ENCODE measurements at regions of chr14 and their contacts with region 1.

Region 1: GRCh38 chr14:101761032-101761880 is at the start of gene PPP2R5C:
- DNase-seq: peak; percentile 74 to 94 (median 87)
- ATAC-seq: peak; percentile 61
- H3K4me3 ChIP-seq: peak within 1 kb of the TSS; percentile 97 to 98
- H3K4me3 Mint-ChIP-seq: peak within 1 kb of the TSS; percentile 95
- H3K27ac ChIP-seq: peak within 1 kb of the TSS; percentile 90 to 93
- H3K27ac Mint-ChIP-seq: peak within 1 kb of the TSS; percentile 94
- H3K4me1 ChIP-seq: peaks cover 25% of the 10 kb centered on the region
- H3K4me1 Mint-ChIP-seq: peaks cover 41% of the 10 kb centered on the region
- H3K27me3 ChIP-seq: no peaks in the 10 kb centered on the region
- H3K27me3 Mint-ChIP-seq: no peaks in the 10 kb centered on the region
- CTCF ChIP-seq: no peak
- total RNA-seq, gene PPP2R5C: 557 to 560 TPM

Region 2: DNA sequence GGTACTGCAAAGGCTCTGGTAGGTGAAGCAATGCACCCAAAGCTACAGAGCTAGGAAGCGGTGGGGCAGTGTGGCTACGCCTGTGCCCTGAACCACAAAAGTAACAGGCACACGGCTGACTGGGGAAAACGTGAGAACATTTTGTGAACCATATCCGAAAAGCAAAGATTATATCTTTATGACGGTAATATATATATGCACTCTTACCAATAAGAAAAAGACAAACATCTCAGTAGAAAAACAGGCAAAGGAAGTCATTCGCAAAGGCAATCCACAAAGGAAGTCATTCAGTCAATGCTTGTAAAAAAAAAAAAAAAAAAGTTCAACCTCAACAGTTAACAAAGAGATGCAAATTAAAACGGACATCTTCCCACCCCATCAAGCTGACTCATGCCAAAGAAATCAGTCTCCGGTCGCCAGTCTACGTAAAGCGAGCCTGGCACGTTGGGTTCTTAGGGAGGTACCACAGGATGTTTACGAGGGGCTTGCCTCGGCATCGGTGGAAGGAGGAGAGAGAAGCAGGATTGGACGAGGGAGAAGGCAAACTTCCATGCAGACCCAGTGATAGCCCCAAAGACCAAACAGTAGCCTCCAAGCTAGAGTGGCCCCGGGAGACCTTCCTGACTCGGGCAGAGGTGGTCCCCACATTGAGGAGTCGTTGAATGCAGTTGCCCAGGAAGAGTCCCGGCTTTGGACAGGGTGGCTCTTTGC is 39.1 kb before region 1 on chr14:
- CTCF ChIA-PET with region 1: interaction called, 3 read pairs
- POLR2A ChIA-PET with region 1: interaction called, 8 read pairs
- intact Hi-C with region 1: loop called (anchors 1 kb)
- DNase-seq: peak; percentile 60 to 97 (median 79)
- ATAC-seq: peak; percentile 80
- H3K4me3 ChIP-seq: peak overlapping the region; percentile 27 to 42
- H3K4me3 Mint-ChIP-seq: peak overlapping the region; percentile 51
- H3K27ac ChIP-seq: peak overlapping the region; percentile 89 to 94
- H3K27ac Mint-ChIP-seq: peak overlapping the region; percentile 95
- H3K4me1 ChIP-seq: peaks cover 38% of the 10 kb centered on the region
- H3K4me1 Mint-ChIP-seq: peaks cover 57% of the 10 kb centered on the region
- H3K27me3 ChIP-seq: no peaks in the 10 kb centered on the region
- H3K27me3 Mint-ChIP-seq: no peaks in the 10 kb centered on the region
- CTCF ChIP-seq: no peak

Region 3: GRCh38 chr14:101791919-101792572 is 30.8 kb after region 1 on chr14:
- CTCF ChIA-PET with region 1: no interaction called
- POLR2A ChIA-PET with region 1: no interaction called
- intact Hi-C with region 1: no loop called
- DNase-seq: peak in 2 of 9 experiments; percentile 45 to 71
- ATAC-seq: peak; percentile 85
- H3K4me3 ChIP-seq: peak overlapping the region; percentile 14 to 30
- H3K4me3 Mint-ChIP-seq: peak overlapping the region; percentile 72
- H3K27ac ChIP-seq: peak overlapping the region; percentile 7 to 79
- H3K27ac Mint-ChIP-seq: peak overlapping the region; percentile 72
- H3K4me1 ChIP-seq: peaks cover 12% of the 10 kb centered on the region
- H3K4me1 Mint-ChIP-seq: peaks cover 24% of the 10 kb centered on the region
- H3K27me3 ChIP-seq: no peaks in the 10 kb centered on the region
- H3K27me3 Mint-ChIP-seq: no peaks in the 10 kb centered on the region
- CTCF ChIP-seq: no peak

Region 4: GRCh38 chr14:101823511-101824120 is 62.4 kb after region 1 on chr14:
- CTCF ChIA-PET with region 1: interaction called, 3 read pairs
- POLR2A ChIA-PET with region 1: interaction called, 19 read pairs
- intact Hi-C with region 1: loop called in 1 of 2 experiments (anchors 1 kb)
- DNase-seq: peak in 8 of 9 experiments; percentile 58 to 89 (median 75)
- ATAC-seq: peak; percentile 61
- H3K4me3 ChIP-seq: peak overlapping the region; percentile 60 to 61
- H3K4me3 Mint-ChIP-seq: peak overlapping the region; percentile 92
- H3K27ac ChIP-seq: peak overlapping the region; percentile 82 to 99
- H3K27ac Mint-ChIP-seq: peak overlapping the region; percentile 100
- H3K4me1 ChIP-seq: peaks cover 83% of the 10 kb centered on the region
- H3K4me1 Mint-ChIP-seq: peaks cover 86% of the 10 kb centered on the region
- H3K27me3 ChIP-seq: no peaks in the 10 kb centered on the region
- H3K27me3 Mint-ChIP-seq: no peaks in the 10 kb centered on the region
- CTCF ChIP-seq: no peak

Region 5: DNA sequence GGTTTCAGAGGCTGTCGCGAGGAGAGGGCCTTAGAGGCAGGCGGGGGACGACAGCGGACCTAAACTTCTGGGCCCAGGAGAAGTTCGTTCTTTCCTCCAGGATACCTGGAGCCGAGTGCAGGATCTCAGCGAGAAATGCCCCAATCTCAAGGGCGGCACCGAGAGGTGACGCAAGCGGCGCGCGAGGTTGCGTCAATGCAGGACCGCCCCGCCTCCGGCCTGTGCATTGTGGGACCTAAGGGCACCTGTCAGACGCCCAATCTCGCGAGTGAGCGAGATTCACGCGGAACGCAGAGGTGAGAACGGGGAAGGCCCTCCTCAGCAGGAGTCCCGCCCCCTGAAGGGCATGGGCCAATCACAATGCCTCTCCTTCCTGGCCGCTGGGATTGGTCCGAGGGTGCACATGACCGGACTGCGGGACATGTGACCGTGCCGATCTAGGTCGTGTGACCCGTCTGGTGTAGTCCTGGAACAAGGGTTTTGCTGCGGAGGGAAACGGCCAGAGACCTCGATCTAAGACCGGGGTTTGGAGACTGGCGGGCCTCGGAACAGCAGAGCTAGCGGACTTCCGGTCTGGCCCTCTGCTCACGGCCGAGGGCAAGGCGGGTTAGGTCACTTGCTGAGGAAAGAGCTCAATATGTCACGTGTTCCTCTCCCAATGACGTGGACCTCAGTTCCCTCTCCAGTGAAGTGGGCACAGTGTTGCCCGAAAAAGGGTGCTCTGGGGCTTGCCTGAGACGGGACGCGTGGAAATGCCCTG is 186.8 kb after region 1 on chr14:
- CTCF ChIA-PET with region 1: interaction called, 4 read pairs
- POLR2A ChIA-PET with region 1: no interaction called
- intact Hi-C with region 1: loop called (anchors 1 kb)
- DNase-seq: peak; percentile 98 to 100 (median 99)
- ATAC-seq: peak; percentile 95
- H3K4me3 ChIP-seq: peak overlapping the region; percentile 81 to 82
- H3K4me3 Mint-ChIP-seq: peak overlapping the region; percentile 93
- H3K27ac ChIP-seq: peak overlapping the region; percentile 95 to 100
- H3K27ac Mint-ChIP-seq: peak overlapping the region; percentile 99
- H3K4me1 ChIP-seq: peaks cover 14% of the 10 kb centered on the region
- H3K4me1 Mint-ChIP-seq: peaks cover 20% of the 10 kb centered on the region
- H3K27me3 ChIP-seq: peaks cover 0 to 6% of the 10 kb centered on the region in 2 experiments
- H3K27me3 Mint-ChIP-seq: peaks cover 23% of the 10 kb centered on the region
- CTCF ChIP-seq: no peak

Region 6: DNA sequence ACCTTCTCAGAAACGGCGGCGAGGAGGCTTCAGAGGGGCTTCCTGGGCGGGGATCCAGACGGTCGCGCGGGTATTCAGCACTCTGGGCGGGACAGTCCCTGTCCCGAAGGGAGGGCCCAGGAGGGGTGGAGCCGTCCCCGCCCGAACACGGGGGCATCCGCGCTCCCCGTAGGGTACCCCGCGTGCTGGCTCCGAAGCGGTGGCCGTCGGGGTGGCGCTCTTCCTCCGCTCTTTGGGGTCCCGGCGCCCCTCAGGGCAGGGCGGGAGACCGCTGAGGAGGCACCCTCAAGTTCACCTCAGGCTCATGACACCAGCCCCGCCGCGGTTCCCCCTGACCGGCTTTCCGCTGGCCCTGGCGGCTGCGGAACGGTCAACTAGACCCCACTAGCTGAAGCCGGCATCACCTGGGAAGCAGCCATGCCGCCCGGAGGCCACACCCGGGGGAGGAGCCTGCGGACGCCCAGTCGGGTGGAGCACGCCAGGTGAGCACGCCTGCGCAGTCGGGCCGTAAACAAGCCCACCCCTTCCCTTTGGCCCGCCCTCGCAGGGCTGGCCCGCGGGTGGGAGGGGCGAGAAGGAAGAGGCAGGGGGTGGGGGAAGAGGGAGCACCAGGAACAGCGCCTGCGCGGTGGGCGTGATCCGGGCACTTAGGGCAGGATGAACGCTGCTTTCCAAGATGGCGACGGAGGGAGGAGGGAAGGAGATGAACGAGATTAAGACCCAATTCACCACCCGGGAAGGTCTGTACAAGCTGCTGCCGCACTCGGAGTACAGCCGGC is 378.2 kb after region 1 on chr14 and contains the start of gene WDR20:
- CTCF ChIA-PET with region 1: no interaction called
- POLR2A ChIA-PET with region 1: no interaction called
- intact Hi-C with region 1: loop called (anchors 1 kb)
- DNase-seq: peak; percentile 98 to 100 (median 99)
- ATAC-seq: peak; percentile 96
- H3K4me3 ChIP-seq: peak within 1 kb of the TSS; percentile 94 to 95
- H3K4me3 Mint-ChIP-seq: peak within 1 kb of the TSS; percentile 99
- H3K27ac ChIP-seq: peak within 1 kb of the TSS; percentile 87 to 91
- H3K27ac Mint-ChIP-seq: peak within 1 kb of the TSS; percentile 98
- H3K4me1 ChIP-seq: peaks cover 25% of the 10 kb centered on the region
- H3K4me1 Mint-ChIP-seq: peaks cover 29% of the 10 kb centered on the region
- H3K27me3 ChIP-seq: no peaks in the 10 kb centered on the region
- H3K27me3 Mint-ChIP-seq: no peaks in the 10 kb centered on the region
- CTCF ChIP-seq: no peak
- total RNA-seq, gene WDR20: 40.8 to 46.3 TPM

Region 7: GRCh38 chr14:102362545-102363181 is 601.4 kb after region 1 on chr14 and contains the starts of genes CINP and TECPR2:
- CTCF ChIA-PET with region 1: no interaction called
- POLR2A ChIA-PET with region 1: no interaction called
- intact Hi-C with region 1: loop called in 1 of 2 experiments (anchors 5 kb)
- DNase-seq: peak; percentile 93 to 97 (median 96)
- ATAC-seq: peak; percentile 90
- H3K4me3 ChIP-seq: peak within 1 kb of the TSS; percentile 67 to 75
- H3K4me3 Mint-ChIP-seq: peak within 1 kb of the TSS; percentile 95
- H3K27ac ChIP-seq: peak within 1 kb of the TSS; percentile 82 to 86
- H3K27ac Mint-ChIP-seq: peak within 1 kb of the TSS; percentile 96
- H3K4me1 ChIP-seq: peaks cover 15% of the 10 kb centered on the region
- H3K4me1 Mint-ChIP-seq: peaks cover 24% of the 10 kb centered on the region
- H3K27me3 ChIP-seq: no peaks in the 10 kb centered on the region
- H3K27me3 Mint-ChIP-seq: no peaks in the 10 kb centered on the region
- CTCF ChIP-seq: no peak
- total RNA-seq, gene CINP: 15.9 to 19.2 TPM
- total RNA-seq, gene TECPR2: 3.4 to 5.8 TPM

Region 8: DNA sequence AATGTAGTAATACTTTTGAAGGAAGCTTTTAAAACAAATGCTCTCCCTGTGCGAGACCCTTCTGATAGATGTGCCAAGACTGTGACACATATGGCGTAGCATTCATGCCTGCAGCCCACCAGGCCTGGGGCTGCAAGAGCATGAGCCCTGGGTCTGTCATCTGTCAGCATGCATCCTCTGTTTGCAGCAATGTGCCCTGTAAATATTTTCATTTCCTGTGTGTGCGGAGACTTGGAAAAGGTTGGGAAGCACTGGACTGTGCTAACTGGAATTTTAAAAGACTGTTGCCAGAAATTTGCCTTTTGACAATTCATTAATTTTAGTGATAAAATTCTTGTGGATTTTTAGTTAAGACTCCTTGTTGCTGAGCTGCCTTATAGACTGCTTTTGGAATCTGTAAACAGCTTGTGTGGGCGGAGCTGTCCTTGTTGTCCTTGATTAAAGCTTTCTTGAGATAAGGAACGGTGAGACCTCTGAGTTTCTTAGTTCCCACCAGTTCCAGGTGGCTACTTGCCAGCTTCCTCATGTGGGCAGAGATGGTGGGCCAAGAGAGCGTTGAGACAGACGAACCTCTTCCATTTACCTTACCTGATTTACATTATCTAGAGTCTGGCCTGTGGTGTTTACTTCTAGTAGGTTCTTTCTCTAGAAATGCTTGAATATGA is 1647.4 kb after region 1 on chr14:
- CTCF ChIA-PET with region 1: no interaction called
- POLR2A ChIA-PET with region 1: no interaction called
- intact Hi-C with region 1: no loop called
- DNase-seq: no peak
- ATAC-seq: no peak
- H3K4me3 ChIP-seq: no peak overlapping the region
- H3K4me3 Mint-ChIP-seq: no peak overlapping the region
- H3K27ac ChIP-seq: no peak overlapping the region
- H3K27ac Mint-ChIP-seq: no peak overlapping the region
- H3K4me1 ChIP-seq: peaks cover 10% of the 10 kb centered on the region
- H3K4me1 Mint-ChIP-seq: peaks cover 32% of the 10 kb centered on the region
- H3K27me3 ChIP-seq: no peaks in the 10 kb centered on the region
- H3K27me3 Mint-ChIP-seq: no peaks in the 10 kb centered on the region
- CTCF ChIP-seq: no peak